ENCODE measurements at regions of chr9 and their contacts with region 1.

Region 1: DNA sequence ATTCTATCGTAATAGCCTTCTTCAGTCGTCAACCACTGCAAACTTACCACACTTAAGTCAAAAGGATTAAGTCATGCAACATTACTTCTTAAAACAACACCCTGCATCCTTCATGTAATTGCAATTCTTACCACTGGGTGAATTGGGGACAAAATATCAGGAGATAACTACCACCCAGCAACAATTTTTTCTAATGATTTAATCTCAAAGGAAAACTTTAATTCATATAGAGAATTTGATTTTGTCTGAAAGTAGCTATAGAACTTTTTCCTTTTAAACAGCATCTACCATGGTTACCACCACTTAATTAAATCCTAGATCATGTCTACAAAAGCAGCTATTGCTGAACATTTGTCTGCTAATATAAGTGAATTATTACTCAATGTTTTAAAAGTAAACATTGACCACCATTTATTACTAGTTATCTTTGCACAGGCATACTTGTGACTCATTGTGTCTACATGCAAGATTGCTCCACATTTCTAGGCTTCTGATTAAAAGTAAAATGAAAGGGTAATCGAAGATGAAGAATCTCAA is 10.5 kb downstream of the MLLT3 start:
- DNase-seq: no peak
- H3K4me3 ChIP-seq: no peak overlapping the region
- H3K4me3 Mint-ChIP-seq: peak overlapping the region in 1 of 8 donors; percentile 0
- H3K27ac ChIP-seq: no peak overlapping the region
- H3K27ac Mint-ChIP-seq: peak overlapping the region in 1 of 7 donors; percentile 26
- H3K4me1 ChIP-seq: peaks cover 60% of the 10 kb centered on the region
- H3K4me1 Mint-ChIP-seq: peaks cover 42 to 73% (median 60%) of the 10 kb centered on the region in 4 donors
- H3K27me3 ChIP-seq: no peaks in the 10 kb centered on the region
- H3K27me3 Mint-ChIP-seq: no peaks in the 10 kb centered on the region

Region 2: GRCh38 chr9:20209391-20210340 is 402.2 kb before region 1 on chr9:
- CTCF ChIA-PET with region 1: no interaction called
- POLR2A ChIA-PET with region 1: no interaction called
- intact Hi-C with region 1: loop called (anchors 10 kb)
- DNase-seq: peak; percentile 32 to 61 (median 37)
- H3K4me3 ChIP-seq: no peak overlapping the region
- H3K4me3 Mint-ChIP-seq: peak overlapping the region; percentile 18 to 80 (median 62)
- H3K27ac ChIP-seq: peak overlapping the region; percentile 3
- H3K27ac Mint-ChIP-seq: peak overlapping the region; percentile 50 to 88 (median 81)
- H3K4me1 ChIP-seq: peaks cover 26% of the 10 kb centered on the region
- H3K4me1 Mint-ChIP-seq: peaks cover 20 to 30% (median 27%) of the 10 kb centered on the region in 4 donors
- H3K27me3 ChIP-seq: no peaks in the 10 kb centered on the region
- H3K27me3 Mint-ChIP-seq: no peaks in the 10 kb centered on the region

Region 3: GRCh38 chr9:20848490-20848889 is 236.7 kb after region 1 on chr9:
- CTCF ChIA-PET with region 1: no interaction called
- POLR2A ChIA-PET with region 1: no interaction called
- intact Hi-C with region 1: no loop called
- DNase-seq: no peak
- H3K4me3 ChIP-seq: no peak overlapping the region
- H3K4me3 Mint-ChIP-seq: no peak overlapping the region
- H3K27ac ChIP-seq: no peak overlapping the region
- H3K27ac Mint-ChIP-seq: no peak overlapping the region
- H3K4me1 ChIP-seq: no peaks in the 10 kb centered on the region
- H3K4me1 Mint-ChIP-seq: no peaks in the 10 kb centered on the region
- H3K27me3 ChIP-seq: no peaks in the 10 kb centered on the region
- H3K27me3 Mint-ChIP-seq: no peaks in the 10 kb centered on the region

Measured in CD4-positive, alpha-beta memory T cell (primary cell).